GM12878 (cell line): ENCODE measurements at regions of chr17 and their contacts with region 1.

Region 1: GRCh38 chr17:19992803-19993713 is 15.4 kb upstream of the AKAP10 start:
- DNase-seq: peak; percentile 20
- ATAC-seq: peak; percentile 100
- H3K4me3 ChIP-seq: no peak overlapping the region
- H3K27ac ChIP-seq: no peak overlapping the region
- H3K4me1 ChIP-seq: no peaks in the 10 kb centered on the region
- H3K27me3 ChIP-seq: no peaks in the 10 kb centered on the region; a peak in 1 of 4 replicates
- CTCF ChIP-seq: peak; percentile 66 to 83 (median 67)
- EP300 ChIP-seq: no peak
- POLR2A ChIP-seq: no peak
- RAD21 ChIP-seq: peak; percentile 82

Region 2: DNA sequence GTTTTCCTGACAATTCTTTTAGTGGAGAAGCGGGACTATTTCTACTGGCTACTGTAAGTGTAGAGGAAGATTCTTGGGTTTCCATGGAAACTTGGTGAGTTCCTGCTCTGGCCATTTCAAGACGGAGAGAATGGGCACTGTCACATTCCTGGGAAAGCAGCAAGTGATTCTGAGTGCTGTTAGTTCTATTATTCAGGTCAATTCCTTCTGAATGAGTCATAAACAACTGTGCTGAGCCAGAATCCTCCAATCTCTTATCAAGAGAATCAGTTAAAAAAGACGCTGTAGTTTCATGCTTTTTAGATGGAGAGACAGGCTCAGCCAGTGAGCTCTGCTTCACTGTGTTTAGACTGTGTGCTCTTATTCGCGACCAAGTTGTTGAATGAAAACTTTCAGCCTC is 35.0 kb before region 1 on chr17:
- CTCF ChIA-PET with region 1: no interaction called
- POLR2A ChIA-PET with region 1: no interaction called
- RAD21 ChIA-PET with region 1: no interaction called
- SMC1A ChIA-PET with region 1: no interaction called
- in situ Hi-C with region 1: no loop called
- intact Hi-C with region 1: no loop called
- DNase-seq: no peak
- ATAC-seq: no peak
- H3K4me3 ChIP-seq: no peak overlapping the region
- H3K27ac ChIP-seq: no peak overlapping the region
- H3K4me1 ChIP-seq: no peaks in the 10 kb centered on the region
- H3K27me3 ChIP-seq: no peaks in the 10 kb centered on the region
- CTCF ChIP-seq: no peak
- EP300 ChIP-seq: no peak
- POLR2A ChIP-seq: no peak
- RAD21 ChIP-seq: no peak

Region 3: GRCh38 chr17:19977311-19978208 is 15.5 kb before region 1 on chr17 and contains the start of gene AKAP10:
- CTCF ChIA-PET with region 1: interaction called, 15 read pairs
- POLR2A ChIA-PET with region 1: no interaction called
- RAD21 ChIA-PET with region 1: no interaction called
- SMC1A ChIA-PET with region 1: no interaction called
- in situ Hi-C with region 1: no loop called
- intact Hi-C with region 1: no loop called
- DNase-seq: peak; percentile 60
- ATAC-seq: peak; percentile 95
- H3K4me3 ChIP-seq: peak within 1 kb of the TSS; percentile 73
- H3K27ac ChIP-seq: peak within 1 kb of the TSS; percentile 93
- H3K4me1 ChIP-seq: peaks cover 6% of the 10 kb centered on the region; the same call in 1 of the 2 replicates
- H3K27me3 ChIP-seq: no peaks in the 10 kb centered on the region
- CTCF ChIP-seq: 0 out of 6 replicates have a peak, but pooled peaks of 1 of the 3 experiments have one; percentile 1
- EP300 ChIP-seq: 0 out of 4 replicates have a peak, but pooled peaks of 1 of the 2 experiments have one; percentile 7
- POLR2A ChIP-seq: peak; percentile 93
- RAD21 ChIP-seq: no peak
- polyA plus RNA-seq, gene AKAP10: 4.3 to 5.1 TPM

Region 4: DNA sequence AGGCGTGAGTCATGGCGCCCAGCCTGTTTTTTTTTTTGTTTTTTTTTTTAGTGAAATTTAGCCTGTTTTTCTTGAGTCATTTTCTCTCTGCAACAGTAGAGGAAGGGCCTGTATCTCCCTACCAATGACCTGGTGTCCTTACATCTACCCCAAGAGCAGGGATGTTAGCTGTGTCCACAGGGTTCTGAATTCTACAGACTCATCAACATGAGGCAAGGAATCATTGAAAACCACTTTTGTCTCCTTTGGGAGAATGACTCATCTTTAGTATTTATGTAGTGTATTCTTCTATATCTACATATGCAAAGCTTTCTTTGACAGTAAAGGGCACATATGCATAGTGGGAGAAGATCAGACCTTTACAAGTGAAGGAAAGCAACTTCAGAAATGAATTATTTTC is 121.4 kb after region 1 on chr17:
- CTCF ChIA-PET with region 1: interaction called, 28 read pairs
- POLR2A ChIA-PET with region 1: no interaction called
- RAD21 ChIA-PET with region 1: interaction called, 15 read pairs
- SMC1A ChIA-PET with region 1: interaction called, 12 read pairs
- in situ Hi-C with region 1: loop called (anchors 5 kb)
- intact Hi-C with region 1: loop called (anchors 1 kb)
- DNase-seq: no peak
- ATAC-seq: no peak
- H3K4me3 ChIP-seq: no peak overlapping the region
- H3K27ac ChIP-seq: no peak overlapping the region
- H3K4me1 ChIP-seq: no peaks in the 10 kb centered on the region
- H3K27me3 ChIP-seq: no peaks in the 10 kb centered on the region
- CTCF ChIP-seq: no peak
- EP300 ChIP-seq: no peak
- POLR2A ChIP-seq: no peak
- RAD21 ChIP-seq: no peak